Activated CD4-positive, alpha-beta T cell treated with anti-CD3 and anti-CD28 coated beads for 36 hours (primary cell): ENCODE measurements at regions of chr12 and their contacts with region 1.

Region 1: GRCh38 chr12:98503592-98504367 is 11.6 kb upstream of the TMPO start:
- DNase-seq: peak; percentile 98
- ATAC-seq: peak; percentile 85
- H3K4me3 Mint-ChIP-seq: peak overlapping the region; percentile 84
- H3K27ac Mint-ChIP-seq: peak overlapping the region; percentile 99
- H3K4me1 Mint-ChIP-seq: peaks cover 37% of the 10 kb centered on the region
- H3K27me3 Mint-ChIP-seq: peaks cover 2% of the 10 kb centered on the region

Region 2: DNA sequence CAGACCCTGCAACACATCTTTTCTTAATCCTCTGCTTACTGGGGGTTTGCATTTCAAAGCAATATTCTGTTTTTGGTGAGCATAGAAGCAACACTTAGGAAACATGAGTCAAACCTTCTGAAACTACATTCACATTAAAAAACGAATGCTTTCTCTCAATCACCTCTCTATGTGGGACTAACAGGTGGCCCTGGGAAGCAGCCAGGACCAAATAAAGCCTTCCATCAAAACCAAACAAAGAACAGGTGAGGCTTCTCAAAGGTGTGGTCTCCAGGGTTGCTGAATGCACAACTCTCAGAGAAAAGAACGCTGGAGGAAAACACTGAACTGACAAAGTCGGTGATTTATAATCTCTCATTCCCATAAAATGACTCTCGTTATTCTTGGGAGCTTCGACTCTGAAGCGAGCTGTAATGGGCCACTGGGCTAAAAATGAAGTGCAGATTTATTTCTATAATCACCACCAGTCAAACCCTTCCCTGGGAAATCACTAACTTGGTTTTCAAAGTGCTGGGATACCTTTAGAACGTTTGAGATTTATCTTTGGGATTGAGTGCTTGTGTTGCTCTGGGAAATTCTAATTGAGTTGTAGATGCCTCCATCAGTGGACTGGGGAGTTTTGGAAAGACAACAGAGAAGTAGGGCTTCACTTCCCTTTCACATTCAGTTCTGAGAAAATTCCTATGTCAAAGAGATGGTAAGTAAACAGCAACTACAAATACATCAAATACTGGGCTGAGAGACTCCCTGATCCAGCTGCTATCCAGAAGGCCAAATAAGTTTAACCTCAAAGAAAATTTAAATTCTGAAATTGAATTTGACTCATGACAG is 250.4 kb before region 1 on chr12:
- CTCF ChIA-PET with region 1: no interaction called
- POLR2A ChIA-PET with region 1: no interaction called
- intact Hi-C with region 1: no loop called
- DNase-seq: no peak
- ATAC-seq: no peak
- H3K4me3 Mint-ChIP-seq: no peak overlapping the region
- H3K27ac Mint-ChIP-seq: no peak overlapping the region
- H3K4me1 Mint-ChIP-seq: no peaks in the 10 kb centered on the region
- H3K27me3 Mint-ChIP-seq: peaks cover 4% of the 10 kb centered on the region

Region 3: GRCh38 chr12:98280152-98280551 is 223.6 kb before region 1 on chr12:
- CTCF ChIA-PET with region 1: no interaction called
- POLR2A ChIA-PET with region 1: no interaction called
- intact Hi-C with region 1: no loop called
- DNase-seq: no peak
- ATAC-seq: no peak
- H3K4me3 Mint-ChIP-seq: no peak overlapping the region
- H3K27ac Mint-ChIP-seq: no peak overlapping the region
- H3K4me1 Mint-ChIP-seq: no peaks in the 10 kb centered on the region
- H3K27me3 Mint-ChIP-seq: peaks cover 3% of the 10 kb centered on the region

Region 4: GRCh38 chr12:98465950-98466602 is 37.7 kb before region 1 on chr12:
- CTCF ChIA-PET with region 1: no interaction called
- POLR2A ChIA-PET with region 1: no interaction called
- intact Hi-C with region 1: loop called in 1 of 2 experiments (anchors 2 kb)
- DNase-seq: no peak
- ATAC-seq: peak; percentile 40
- H3K4me3 Mint-ChIP-seq: no peak overlapping the region
- H3K27ac Mint-ChIP-seq: no peak overlapping the region
- H3K4me1 Mint-ChIP-seq: peaks cover 24% of the 10 kb centered on the region
- H3K27me3 Mint-ChIP-seq: no peaks in the 10 kb centered on the region

Region 5: DNA sequence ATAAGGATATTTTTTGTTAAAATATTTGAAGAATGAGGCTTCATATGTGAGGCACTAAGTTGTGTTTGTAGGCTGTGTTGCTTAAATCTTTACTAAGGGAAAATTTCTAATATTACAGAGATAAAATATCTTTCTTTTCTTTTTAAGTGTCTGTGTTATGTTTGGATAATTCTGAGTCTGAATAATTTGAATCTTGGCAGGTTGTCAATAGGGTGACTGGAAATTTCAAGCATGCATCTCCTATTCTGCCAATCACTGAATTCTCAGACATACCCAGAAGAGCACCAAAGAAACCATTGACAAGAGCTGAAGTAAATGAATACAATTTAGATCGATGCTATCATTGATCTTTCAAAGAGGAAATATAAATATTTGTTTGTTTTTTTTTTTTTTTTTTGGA is 41.0 kb after region 1 on chr12:
- CTCF ChIA-PET with region 1: no interaction called
- POLR2A ChIA-PET with region 1: no interaction called
- intact Hi-C with region 1: no loop called
- DNase-seq: no peak
- ATAC-seq: no peak
- H3K4me3 Mint-ChIP-seq: no peak overlapping the region
- H3K27ac Mint-ChIP-seq: no peak overlapping the region
- H3K4me1 Mint-ChIP-seq: peaks cover 2% of the 10 kb centered on the region
- H3K27me3 Mint-ChIP-seq: no peaks in the 10 kb centered on the region

Region 6: DNA sequence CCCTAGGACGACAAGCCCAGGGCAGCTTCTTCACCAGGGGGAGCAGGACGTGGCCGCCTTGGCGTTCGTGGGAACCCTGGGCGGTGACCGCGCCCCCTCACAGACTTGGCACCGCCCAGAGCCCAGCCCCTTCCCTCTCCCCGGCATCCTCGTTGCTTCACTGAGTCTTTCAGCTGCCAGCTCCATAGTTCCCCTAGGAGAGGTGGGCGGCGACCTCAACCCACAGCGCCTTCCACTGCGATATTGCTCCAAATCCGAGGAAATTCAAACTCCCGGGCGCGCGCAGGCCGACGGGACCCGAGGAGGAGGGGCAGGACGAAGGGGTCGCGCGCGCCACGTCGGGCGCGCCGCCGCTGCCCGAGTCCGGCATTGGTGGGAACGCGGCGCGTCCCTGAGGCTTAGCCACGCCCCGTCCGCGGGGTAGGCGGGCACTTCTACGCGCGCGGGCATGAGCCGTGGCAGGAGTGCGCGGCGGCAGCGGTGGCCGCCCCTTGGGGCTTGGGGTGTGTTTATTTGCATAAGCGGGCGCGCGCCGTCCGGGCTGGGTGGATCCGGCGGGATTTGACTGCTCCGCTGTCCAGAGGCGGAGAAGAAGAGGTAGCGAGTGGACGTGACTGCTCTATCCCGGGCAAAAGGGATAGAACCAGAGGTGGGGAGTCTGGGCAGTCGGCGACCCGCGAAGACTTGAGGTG is 141.1 kb after region 1 on chr12 and contains the starts of genes APAF1 and IKBIP:
- CTCF ChIA-PET with region 1: no interaction called
- POLR2A ChIA-PET with region 1: no interaction called
- intact Hi-C with region 1: loop called (anchors 1 kb)
- DNase-seq: peak; percentile 98
- ATAC-seq: peak; percentile 92
- H3K4me3 Mint-ChIP-seq: peak within 1 kb of the TSS; percentile 91
- H3K27ac Mint-ChIP-seq: peak within 1 kb of the TSS; percentile 94
- H3K4me1 Mint-ChIP-seq: peaks cover 16% of the 10 kb centered on the region
- H3K27me3 Mint-ChIP-seq: no peaks in the 10 kb centered on the region
- total RNA-seq, gene APAF1: 16.5 to 17.4 TPM
- total RNA-seq, gene IKBIP: 20.1 to 27.0 TPM